ENCODE measurements at regions of chr18 and their contacts with region 1.

Region 1: GRCh38 chr18:3771121-3771971 is 321.4 kb downstream of the TGIF1 start:
- DNase-seq: peak; percentile 85
- H3K4me3 Mint-ChIP-seq: peak overlapping the region; percentile 38
- H3K27ac Mint-ChIP-seq: peak overlapping the region; percentile 15
- H3K4me1 Mint-ChIP-seq: peaks cover 11% of the 10 kb centered on the region
- H3K27me3 Mint-ChIP-seq: no peaks in the 10 kb centered on the region
- CTCF ChIP-seq: peak; percentile 93

Region 2: DNA sequence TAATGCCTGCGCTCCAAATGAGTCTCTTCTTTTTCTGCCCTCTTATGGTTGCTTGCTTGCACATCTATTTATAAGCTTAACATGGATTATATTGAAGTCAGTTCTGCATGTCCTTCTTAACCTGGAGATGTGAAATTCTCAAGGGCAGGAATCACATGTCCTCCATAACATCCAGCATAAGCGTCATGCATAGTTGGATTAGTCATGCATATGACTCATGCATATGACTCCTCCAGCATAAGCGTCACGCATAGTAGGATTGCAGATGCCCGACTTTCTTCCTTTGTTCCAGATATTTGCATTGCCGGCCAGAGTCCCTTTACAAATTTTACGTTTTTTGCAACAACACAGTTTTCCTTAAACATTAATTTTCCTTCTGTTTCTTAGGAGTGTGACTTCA is 12.8 kb before region 1 on chr18:
- CTCF ChIA-PET with region 1: interaction called, 19 read pairs
- POLR2A ChIA-PET with region 1: interaction called, 10 read pairs
- intact Hi-C with region 1: no loop called
- DNase-seq: peak; percentile 85
- H3K4me3 Mint-ChIP-seq: no peak overlapping the region
- H3K27ac Mint-ChIP-seq: no peak overlapping the region
- H3K4me1 Mint-ChIP-seq: peaks cover 7% of the 10 kb centered on the region
- H3K27me3 Mint-ChIP-seq: no peaks in the 10 kb centered on the region
- CTCF ChIP-seq: no peak

Region 3: DNA sequence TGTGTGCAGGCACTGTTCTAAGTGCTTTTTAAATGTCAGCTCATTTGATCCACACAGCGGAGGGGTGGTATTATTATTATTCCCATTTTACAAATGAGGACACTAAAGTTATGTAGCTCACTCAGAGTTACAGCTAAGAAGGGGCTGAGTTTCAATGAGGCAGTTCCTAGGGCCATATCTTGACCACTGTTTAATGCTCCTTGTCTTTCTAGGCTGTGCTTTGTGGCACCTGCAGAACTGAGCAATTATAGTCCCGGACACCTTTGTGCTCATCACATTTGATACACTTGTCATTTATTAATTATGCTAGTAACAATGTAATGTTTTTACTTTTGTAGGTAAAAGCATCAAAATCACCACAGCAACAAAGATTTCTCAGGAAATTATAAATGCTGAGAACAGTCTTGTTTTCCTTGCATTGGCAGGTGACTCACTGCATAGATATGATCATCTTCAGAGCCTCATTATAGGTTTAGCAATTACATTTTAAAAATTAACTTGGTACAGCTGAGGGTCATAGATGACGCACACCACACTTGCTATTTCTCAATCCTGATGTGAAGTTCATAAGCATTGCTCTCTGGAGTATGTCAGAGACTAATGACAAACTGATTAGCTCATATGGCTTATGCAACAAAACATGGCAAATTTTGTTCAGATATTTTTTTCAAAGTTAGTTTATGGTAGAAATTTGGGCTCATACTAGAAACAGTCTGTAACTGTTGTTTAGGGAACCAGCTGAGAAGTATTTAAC is 45.4 kb after region 1 on chr18:
- CTCF ChIA-PET with region 1: interaction called, 17 read pairs
- POLR2A ChIA-PET with region 1: no interaction called
- intact Hi-C with region 1: no loop called
- DNase-seq: peak; percentile 79
- H3K4me3 Mint-ChIP-seq: no peak overlapping the region
- H3K27ac Mint-ChIP-seq: peak overlapping the region; percentile 67
- H3K4me1 Mint-ChIP-seq: peaks cover 23% of the 10 kb centered on the region
- H3K27me3 Mint-ChIP-seq: no peaks in the 10 kb centered on the region
- CTCF ChIP-seq: no peak

Region 4: GRCh38 chr18:3863593-3863992 is 92.2 kb after region 1 on chr18:
- CTCF ChIA-PET with region 1: interaction called, 199 read pairs
- POLR2A ChIA-PET with region 1: interaction called, 9 read pairs
- intact Hi-C with region 1: no loop called
- DNase-seq: no peak
- H3K4me3 Mint-ChIP-seq: no peak overlapping the region
- H3K27ac Mint-ChIP-seq: no peak overlapping the region
- H3K4me1 Mint-ChIP-seq: no peaks in the 10 kb centered on the region
- H3K27me3 Mint-ChIP-seq: no peaks in the 10 kb centered on the region
- CTCF ChIP-seq: no peak

Region 5: GRCh38 chr18:3983351-3983969 is 212.1 kb after region 1 on chr18:
- CTCF ChIA-PET with region 1: interaction called, 30 read pairs
- POLR2A ChIA-PET with region 1: interaction called, 3 read pairs
- intact Hi-C with region 1: no loop called
- DNase-seq: peak; percentile 59
- H3K4me3 Mint-ChIP-seq: no peak overlapping the region
- H3K27ac Mint-ChIP-seq: peak overlapping the region; percentile 14
- H3K4me1 Mint-ChIP-seq: peaks cover 21% of the 10 kb centered on the region
- H3K27me3 Mint-ChIP-seq: no peaks in the 10 kb centered on the region
- CTCF ChIP-seq: no peak